CD4-positive, alpha-beta memory T cell (primary cell): ENCODE measurements at regions of chr1 and their contacts with region 1.

Region 1: DNA sequence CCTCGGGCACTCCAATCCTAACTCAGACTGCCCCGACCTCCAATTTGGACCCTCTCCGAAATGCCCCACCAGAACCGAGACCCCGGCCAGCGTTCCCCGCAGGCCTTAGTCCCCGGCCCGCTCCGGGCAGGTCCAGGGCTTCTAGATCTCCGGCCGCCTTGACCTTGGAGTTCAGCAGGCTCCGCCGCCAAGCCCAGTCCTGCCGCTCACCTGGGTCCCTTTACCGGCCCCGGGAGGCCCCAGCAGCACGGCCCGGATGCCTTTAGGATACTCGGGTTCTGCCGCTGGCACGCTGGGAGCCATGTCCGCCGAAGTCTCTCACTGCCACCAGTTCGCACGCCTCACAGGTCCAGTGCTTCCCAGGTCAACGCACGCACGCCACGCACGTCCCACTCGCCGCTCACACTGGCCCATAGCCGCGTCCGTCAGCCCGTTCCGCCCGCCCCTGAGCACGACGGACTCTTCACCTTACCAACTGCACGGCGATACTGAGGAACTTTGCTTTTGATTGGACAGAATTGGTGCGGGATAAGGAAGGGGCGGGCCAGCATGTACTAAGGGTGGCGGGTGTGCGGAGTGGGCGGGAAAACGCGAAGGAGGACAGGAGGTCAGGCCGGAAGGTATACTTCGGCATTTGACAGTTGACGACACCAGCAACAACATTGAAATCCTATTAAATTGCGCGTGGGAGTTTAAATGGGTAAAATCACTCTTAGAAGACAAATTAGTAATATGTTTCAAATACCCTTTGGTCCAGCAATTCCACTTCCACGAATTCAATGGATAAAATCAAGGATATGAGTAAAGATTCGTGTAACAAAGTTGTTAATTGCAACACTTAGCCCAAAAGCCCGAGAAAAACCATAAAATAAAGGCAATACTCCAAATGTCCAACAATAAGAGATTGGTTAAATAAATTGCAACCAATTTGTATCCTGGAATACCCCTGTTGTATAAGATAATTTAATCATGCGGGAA is at the start of gene AK2:
- DNase-seq: peak; percentile 85 to 90 (median 88)
- H3K4me3 ChIP-seq: peak within 1 kb of the TSS; percentile 79 to 85
- H3K4me3 Mint-ChIP-seq: peak within 1 kb of the TSS; percentile 96 to 100 (median 98)
- H3K27ac ChIP-seq: peak within 1 kb of the TSS; percentile 70
- H3K27ac Mint-ChIP-seq: peak within 1 kb of the TSS; percentile 40 to 96 (median 95)
- H3K4me1 ChIP-seq: peaks cover 33% of the 10 kb centered on the region
- H3K4me1 Mint-ChIP-seq: peaks cover 21 to 51% (median 40%) of the 10 kb centered on the region in 4 donors
- H3K27me3 ChIP-seq: no peaks in the 10 kb centered on the region
- H3K27me3 Mint-ChIP-seq: no peaks in the 10 kb centered on the region
- total RNA-seq, gene AK2: 88.5 to 94.5 TPM

Region 2: DNA sequence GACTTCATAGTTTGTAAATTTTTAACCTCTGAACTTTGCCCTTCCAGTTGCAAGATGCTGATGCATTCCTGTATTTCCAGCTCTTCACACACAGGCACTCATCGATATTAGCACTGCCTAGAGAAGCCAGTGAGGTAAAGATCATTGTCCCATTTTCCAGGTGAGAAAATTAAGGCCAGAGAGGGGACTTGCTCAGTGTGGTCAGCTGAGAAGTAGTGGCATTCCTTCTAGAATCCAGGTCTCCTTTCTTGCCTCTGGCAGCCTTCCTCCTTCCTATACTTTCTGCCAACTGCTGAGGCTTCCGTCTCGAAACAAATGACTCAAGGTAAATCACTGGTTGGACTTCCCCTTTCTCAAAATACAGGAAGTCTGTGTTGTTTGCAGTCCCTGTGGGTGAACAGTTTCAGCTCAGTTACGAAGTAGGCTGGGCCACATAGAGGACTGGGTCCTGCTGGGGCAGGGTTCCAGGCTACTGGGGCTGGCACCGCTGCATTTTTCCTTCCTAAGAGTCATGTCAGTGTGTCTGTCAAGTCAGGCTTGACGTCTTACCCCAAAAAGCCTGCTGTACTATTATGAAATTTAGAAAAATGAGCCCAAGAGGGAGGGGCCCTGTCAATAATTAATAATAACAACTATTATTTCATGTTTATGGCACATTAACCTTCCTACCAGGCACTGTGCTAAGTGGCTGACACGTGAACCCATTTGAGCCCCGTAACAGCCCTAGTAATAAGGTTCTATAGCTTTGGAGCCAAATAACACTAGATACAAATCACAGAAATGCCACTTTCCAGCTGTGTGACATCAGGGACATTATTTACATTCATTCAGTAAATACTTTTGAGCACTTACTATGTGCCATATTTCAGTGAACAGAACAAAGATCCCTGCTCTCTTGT is 55.6 kb before region 1 on chr1:
- CTCF ChIA-PET with region 1: no interaction called
- POLR2A ChIA-PET with region 1: interaction called, 4 read pairs
- intact Hi-C with region 1: loop called (anchors 5 kb)
- DNase-seq: peak; percentile 69 to 82 (median 73)
- H3K4me3 ChIP-seq: peak overlapping the region; percentile 12 to 46
- H3K4me3 Mint-ChIP-seq: peak overlapping the region; percentile 68 to 86 (median 83)
- H3K27ac ChIP-seq: peak overlapping the region; percentile 93
- H3K27ac Mint-ChIP-seq: peak overlapping the region; percentile 88 to 98 (median 96)
- H3K4me1 ChIP-seq: peaks cover 51% of the 10 kb centered on the region
- H3K4me1 Mint-ChIP-seq: peaks cover 26 to 52% (median 41%) of the 10 kb centered on the region in 4 donors
- H3K27me3 ChIP-seq: no peaks in the 10 kb centered on the region
- H3K27me3 Mint-ChIP-seq: no peaks in the 10 kb centered on the region

Region 3: DNA sequence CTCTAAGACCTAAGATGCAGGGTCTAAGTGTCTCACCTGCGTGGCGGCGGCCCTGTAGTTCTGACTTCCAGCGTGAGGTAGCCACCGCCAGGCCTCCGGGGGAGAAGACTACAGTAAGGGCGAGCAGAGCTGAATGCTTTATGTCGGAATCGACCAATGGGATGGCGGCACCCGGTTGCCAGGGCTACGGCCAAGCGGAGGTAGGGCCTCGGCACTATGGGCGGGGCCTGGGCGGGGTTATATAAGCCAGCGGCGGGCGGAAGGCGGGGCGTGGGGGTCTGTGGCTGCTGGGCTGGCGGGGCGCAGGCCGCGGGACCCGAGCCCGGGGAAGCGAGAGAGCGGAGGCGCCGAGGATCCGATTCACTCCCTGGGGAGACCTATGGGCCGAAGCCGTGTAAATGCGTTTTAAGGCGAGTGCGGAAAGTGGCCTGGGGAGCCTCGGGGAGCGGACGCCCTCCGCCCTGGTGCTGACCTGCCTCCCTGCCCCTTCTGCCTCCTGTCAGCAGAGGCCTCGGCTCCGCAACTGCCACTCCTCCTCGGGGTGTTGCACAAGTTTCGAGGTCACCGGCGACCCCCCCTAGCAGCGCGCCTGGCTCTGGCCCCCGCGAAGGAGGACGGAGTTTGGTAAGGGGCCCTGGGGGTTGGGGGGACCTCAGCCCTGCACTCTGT is 44.2 kb after region 1 on chr1 and contains the start of gene AZIN2:
- CTCF ChIA-PET with region 1: no interaction called
- POLR2A ChIA-PET with region 1: no interaction called
- intact Hi-C with region 1: loop called (anchors 2 kb)
- DNase-seq: peak; percentile 94 to 98 (median 96)
- H3K4me3 ChIP-seq: peak within 1 kb of the TSS; percentile 42 to 84
- H3K4me3 Mint-ChIP-seq: peak within 1 kb of the TSS; percentile 82 to 89 (median 86)
- H3K27ac ChIP-seq: peak within 1 kb of the TSS; percentile 58
- H3K27ac Mint-ChIP-seq: peak within 1 kb of the TSS; percentile 85 to 92 (median 90)
- H3K4me1 ChIP-seq: peaks cover 28% of the 10 kb centered on the region
- H3K4me1 Mint-ChIP-seq: peaks cover 11 to 44% (median 27%) of the 10 kb centered on the region in 4 donors
- H3K27me3 ChIP-seq: no peaks in the 10 kb centered on the region
- H3K27me3 Mint-ChIP-seq: no peaks in the 10 kb centered on the region
- total RNA-seq, gene AZIN2: 6.9 to 8.0 TPM

Region 4: GRCh38 chr1:33094971-33095604 is 58.3 kb after region 1 on chr1:
- CTCF ChIA-PET with region 1: no interaction called
- POLR2A ChIA-PET with region 1: no interaction called
- intact Hi-C with region 1: loop called (anchors 2 kb)
- DNase-seq: no peak
- H3K4me3 ChIP-seq: no peak overlapping the region
- H3K4me3 Mint-ChIP-seq: peak overlapping the region in 1 of 8 donors; percentile 31
- H3K27ac ChIP-seq: no peak overlapping the region
- H3K27ac Mint-ChIP-seq: peak overlapping the region in 2 of 7 donors; percentile 53 to 55
- H3K4me1 ChIP-seq: peaks cover 42% of the 10 kb centered on the region
- H3K4me1 Mint-ChIP-seq: peaks cover 26 to 58% (median 41%) of the 10 kb centered on the region in 4 donors
- H3K27me3 ChIP-seq: no peaks in the 10 kb centered on the region
- H3K27me3 Mint-ChIP-seq: no peaks in the 10 kb centered on the region

Region 5: DNA sequence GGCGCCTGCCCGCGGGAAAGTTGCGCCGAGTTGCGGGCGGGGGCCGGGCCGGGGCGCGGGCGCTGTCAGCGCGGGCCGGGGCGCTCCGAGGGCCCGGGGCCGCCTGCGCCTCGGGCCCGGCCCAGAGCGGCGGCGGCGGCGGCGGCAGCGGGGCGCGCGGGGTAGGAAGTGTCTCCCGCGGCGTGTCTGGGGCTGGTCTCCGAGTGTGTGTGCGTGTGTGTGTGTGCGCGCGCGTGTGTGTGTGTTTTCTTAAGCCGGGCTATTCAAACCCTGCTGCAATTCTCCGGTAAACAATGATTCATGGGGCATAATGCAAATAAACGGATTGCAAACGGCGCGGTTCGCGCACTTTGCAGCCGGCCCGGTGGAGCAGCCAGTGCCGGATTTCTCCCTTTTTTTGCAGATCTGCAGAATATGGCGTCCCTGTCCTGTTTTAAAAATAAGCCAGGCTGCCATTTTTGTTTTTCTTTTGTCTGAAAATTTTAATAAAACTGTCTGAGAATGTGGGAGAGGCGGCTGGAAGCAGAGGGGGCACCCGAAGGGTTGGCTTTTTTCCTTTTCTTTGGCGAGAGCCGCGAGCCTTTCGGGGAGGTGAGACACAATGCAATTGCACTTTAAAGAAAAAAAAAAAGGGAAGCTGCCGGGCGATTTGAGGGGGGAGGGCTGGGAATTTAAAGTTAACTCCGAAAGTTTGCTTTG is 220.0 kb after region 1 on chr1:
- CTCF ChIA-PET with region 1: no interaction called
- POLR2A ChIA-PET with region 1: no interaction called
- intact Hi-C with region 1: loop called (anchors 5 kb)
- DNase-seq: peak; percentile 58 to 69 (median 60)
- H3K4me3 ChIP-seq: peak overlapping the region; percentile 33 to 55
- H3K4me3 Mint-ChIP-seq: peak overlapping the region; percentile 96 to 100 (median 100)
- H3K27ac ChIP-seq: peak overlapping the region; percentile 40
- H3K27ac Mint-ChIP-seq: peak overlapping the region; percentile 92 to 99 (median 98)
- H3K4me1 ChIP-seq: peaks cover 35% of the 10 kb centered on the region
- H3K4me1 Mint-ChIP-seq: peaks cover 25 to 48% (median 33%) of the 10 kb centered on the region in 4 donors
- H3K27me3 ChIP-seq: no peaks in the 10 kb centered on the region
- H3K27me3 Mint-ChIP-seq: peaks cover 0 to 2% of the 10 kb centered on the region in 2 donors